A549 (cell line): ENCODE measurements at regions of chr15 and their contacts with region 1.

Region 1: GRCh38 chr15:22786868-22787698 is 639 bp downstream of the NIPA1 start:
- DNase-seq: peak; percentile 17 to 38
- ATAC-seq: peak; percentile 54 to 69
- H3K4me3 ChIP-seq: peak overlapping the region; percentile 61
- H3K27ac ChIP-seq: peak overlapping the region; percentile 85 to 97
- H3K4me1 ChIP-seq: 0 out of 3 replicates have a peak, but pooled peaks cover 3% of the 10 kb centered on the region
- CTCF ChIP-seq: no peak
- EP300 ChIP-seq: no peak
- POLR2A ChIP-seq: no peak
- RAD21 ChIP-seq: no peak

Region 2: DNA sequence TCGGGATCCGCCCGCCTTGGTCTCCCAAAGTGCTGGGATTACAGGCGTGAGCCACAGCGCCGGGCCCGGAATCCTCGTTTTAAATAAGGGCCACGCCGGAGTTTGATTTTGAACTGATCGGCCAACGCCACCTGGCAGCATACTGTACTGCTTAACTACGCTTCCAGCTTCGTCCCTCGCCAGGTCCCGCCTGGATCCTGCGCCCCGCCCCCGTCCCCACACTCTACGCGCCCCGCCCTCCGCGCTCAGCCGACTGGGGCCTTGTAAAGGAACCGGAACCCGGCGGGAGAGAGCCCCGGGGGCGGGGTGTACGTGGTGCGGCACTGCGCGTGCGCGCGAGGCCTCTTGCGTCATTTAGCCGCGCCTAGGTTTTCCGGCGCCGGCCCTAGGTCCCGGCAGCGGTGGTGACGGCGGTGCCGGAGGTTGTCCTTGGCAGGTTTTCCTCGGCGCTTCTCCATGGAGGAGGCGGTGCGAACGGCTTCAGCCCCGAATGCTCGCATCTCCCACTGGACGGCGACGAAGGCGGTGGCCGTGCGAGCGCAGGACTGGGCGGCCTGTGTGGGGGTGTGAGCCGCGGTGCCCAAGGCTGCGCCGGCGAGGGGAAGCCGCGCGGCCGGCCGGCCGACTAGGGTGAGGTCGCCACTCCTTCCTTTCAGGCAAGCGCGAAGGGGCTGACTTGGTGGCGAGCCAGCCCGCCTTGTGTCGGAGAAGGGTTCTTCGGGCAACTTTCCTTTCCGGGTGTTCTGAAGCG is 51.4 kb after region 1 on chr15 and contains the start of gene NIPA2:
- CTCF ChIA-PET with region 1: interaction called, 5 read pairs
- POLR2A ChIA-PET with region 1: interaction called, 14 read pairs
- DNase-seq: peak; percentile 93 to 99
- ATAC-seq: peak; percentile 98
- H3K4me3 ChIP-seq: peak within 1 kb of the TSS; percentile 90
- H3K27ac ChIP-seq: peak within 1 kb of the TSS; percentile 89 to 93
- H3K4me1 ChIP-seq: peaks cover 10% of the 10 kb centered on the region; the same call in 2 of the 3 replicates
- CTCF ChIP-seq: no peak
- EP300 ChIP-seq: no peak
- POLR2A ChIP-seq: peak; percentile 85
- RAD21 ChIP-seq: peak in 1 of 2 experiments; percentile 36; a peak in 2 of 5 replicates
- polyA plus RNA-seq, gene NIPA2: 94.0 and 153 TPM in 2 replicates